ENCODE measurements at regions of chr1 and their contacts with region 1.

Region 1: DNA sequence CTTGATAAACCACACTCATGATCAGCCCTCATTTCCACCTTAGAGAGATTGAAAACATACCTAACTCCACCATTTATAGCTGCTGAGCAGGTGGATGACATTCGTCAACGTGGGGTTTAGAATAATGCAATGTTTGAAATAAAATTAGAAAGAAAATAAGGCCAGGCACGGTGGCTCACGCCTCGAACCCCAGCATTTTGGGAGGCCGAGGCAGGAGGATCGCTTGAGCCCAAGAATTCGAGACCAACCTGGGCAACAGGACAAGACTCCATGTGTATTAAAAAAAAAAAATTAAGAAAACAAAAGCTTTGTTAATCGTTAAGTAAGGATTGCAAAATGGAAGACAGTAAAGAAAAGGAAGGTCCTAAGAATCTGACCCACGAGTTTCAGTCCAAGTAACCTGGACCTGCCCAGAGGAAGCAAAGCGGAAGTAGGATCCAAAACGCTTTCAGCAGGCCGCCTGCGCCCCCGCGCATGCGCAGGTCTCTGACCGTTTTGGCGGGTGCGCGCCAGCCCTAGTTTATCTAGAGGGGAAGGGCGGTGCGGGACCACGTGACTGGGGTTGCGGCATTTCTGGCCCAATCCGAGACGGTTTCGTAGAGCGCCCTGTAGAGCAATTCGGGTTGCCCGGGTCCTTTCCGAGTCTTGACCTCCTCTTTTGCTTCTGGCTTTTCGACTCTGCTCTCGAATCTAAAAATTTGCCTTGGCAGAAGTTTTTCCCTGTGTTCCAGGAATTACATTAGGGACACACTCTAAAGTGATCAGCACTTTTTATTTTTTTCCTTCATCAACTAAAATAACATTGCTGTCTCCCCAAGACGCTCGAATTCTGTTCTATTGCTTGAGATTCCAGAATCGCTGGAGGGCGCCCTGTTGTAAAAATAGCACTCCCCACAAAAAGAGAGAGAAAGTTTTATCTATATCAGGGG is 22.5 kb downstream of the ANP32E start:
- DNase-seq: peak; percentile 81 to 95 (median 88)
- ATAC-seq: peak; percentile 99
- H3K4me3 Mint-ChIP-seq: peak overlapping the region; percentile 85 to 96 (median 92)
- H3K27ac Mint-ChIP-seq: peak overlapping the region; percentile 92 to 99 (median 95)
- H3K4me1 Mint-ChIP-seq: peaks cover 3 to 18% (median 15%) of the 10 kb centered on the region in 4 donors
- H3K27me3 Mint-ChIP-seq: no peaks in the 10 kb centered on the region

Region 2: GRCh38 chr1:150194381-150195031 is 18.9 kb before region 1 on chr1:
- POLR2A ChIA-PET with region 1: no interaction called
- DNase-seq: no peak
- ATAC-seq: no peak
- H3K4me3 Mint-ChIP-seq: no peak overlapping the region
- H3K27ac Mint-ChIP-seq: no peak overlapping the region
- H3K4me1 Mint-ChIP-seq: no peaks in the 10 kb centered on the region
- H3K27me3 Mint-ChIP-seq: peaks cover 0 to 12% (median 4%) of the 10 kb centered on the region in 5 donors

Region 3: DNA sequence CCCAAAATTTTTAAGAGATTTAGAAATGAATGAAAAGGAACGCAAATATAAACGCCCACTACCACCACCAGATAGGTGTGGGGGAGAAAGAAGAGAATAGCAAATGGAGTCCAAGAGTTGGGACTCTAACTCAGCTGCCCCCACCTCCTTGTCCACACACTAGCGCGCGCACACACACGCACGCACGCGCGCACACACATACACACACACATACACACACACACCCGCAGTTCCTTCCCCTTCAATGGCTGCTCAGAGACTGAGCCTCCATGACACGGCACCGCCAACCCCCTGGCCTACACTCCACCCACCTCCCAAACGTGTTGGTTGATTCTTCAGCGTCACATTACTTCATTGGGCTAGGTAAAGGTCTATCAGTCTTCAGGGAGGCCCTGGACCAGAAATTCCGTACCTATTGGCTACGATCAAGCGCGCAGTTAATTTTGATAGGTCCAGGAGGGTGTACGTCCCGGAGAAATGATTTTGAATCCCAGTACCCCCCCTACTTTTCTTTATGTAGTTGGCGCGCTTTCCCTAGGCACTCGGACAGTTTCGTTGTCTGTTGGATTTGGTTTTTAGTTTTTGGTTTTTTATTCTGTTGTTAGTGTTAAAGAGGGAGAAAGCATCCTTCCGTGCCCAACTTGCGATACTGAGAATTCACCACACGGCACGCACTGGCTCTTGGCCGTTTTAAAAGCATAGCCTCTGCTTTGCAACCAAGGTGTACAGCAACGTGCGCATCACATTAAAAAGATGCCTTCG is 22.6 kb after region 1 on chr1 and contains the start of gene ANP32E:
- POLR2A ChIA-PET with region 1: interaction called, 46 read pairs
- DNase-seq: peak; percentile 79 to 98 (median 95)
- ATAC-seq: peak; percentile 88
- H3K4me3 Mint-ChIP-seq: peak within 1 kb of the TSS in 6 of 10 donors; percentile 91 to 98 (median 98)
- H3K27ac Mint-ChIP-seq: peak within 1 kb of the TSS in 9 of 10 donors; percentile 70 to 99 (median 97)
- H3K4me1 Mint-ChIP-seq: peaks cover 11 to 21% (median 20%) of the 10 kb centered on the region in 4 donors
- H3K27me3 Mint-ChIP-seq: no peaks in the 10 kb centered on the region
- polyA plus RNA-seq, gene ANP32E: 47.5 to 51.0 (median 50.3) TPM

Measured in naive thymus-derived CD8-positive, alpha-beta T cell (primary cell).